AG04450 (cell line): ENCODE measurements at regions of chr9 and their contacts with region 1.

Region 1: GRCh38 chr9:94213511-94214124 is 45.5 kb upstream of the ZNF169 start:
- DNase-seq: peak; percentile 39
- H3K4me3 ChIP-seq: no peak overlapping the region
- H3K27ac ChIP-seq: no peak overlapping the region
- H3K27me3 ChIP-seq: no peaks in the 10 kb centered on the region
- CTCF ChIP-seq: peak; percentile 85

Region 2: DNA sequence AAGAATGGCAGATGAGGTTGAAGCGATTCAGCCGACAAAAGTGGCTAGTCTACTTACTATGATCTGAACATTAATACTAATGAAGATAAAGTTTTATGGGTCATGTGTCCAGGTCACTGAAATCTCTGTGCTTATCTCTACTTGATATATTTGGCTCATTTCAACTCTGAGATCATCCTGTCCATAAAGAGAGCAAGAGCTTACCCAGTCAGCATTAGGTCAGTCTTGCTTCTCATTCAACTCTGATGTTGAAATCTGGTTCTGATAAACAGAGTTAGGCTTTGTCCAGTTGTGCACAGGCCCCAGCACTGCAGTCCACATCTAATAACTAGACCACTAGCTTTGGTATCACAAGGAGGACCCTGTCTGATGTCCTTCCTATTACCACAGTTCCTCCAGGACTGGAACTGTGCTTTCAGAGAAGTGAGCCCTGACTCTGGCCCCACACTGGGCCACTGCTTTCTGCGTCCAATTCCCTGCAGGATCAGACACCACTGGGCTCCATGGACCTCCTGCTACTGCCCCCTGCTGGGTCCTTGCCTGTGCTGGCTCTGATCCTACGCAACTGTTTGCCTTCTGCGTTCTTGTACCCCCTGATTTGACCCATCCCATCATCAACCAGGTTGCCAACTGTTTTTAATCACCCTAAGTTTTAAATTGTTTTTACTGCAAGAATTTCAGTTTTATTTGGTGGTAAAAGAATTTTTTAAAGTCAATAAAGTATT is 785.8 kb before region 1 on chr9:
- CTCF ChIA-PET with region 1: no interaction called
- POLR2A ChIA-PET with region 1: no interaction called
- DNase-seq: no peak
- H3K4me3 ChIP-seq: no peak overlapping the region
- H3K27ac ChIP-seq: no peak overlapping the region
- H3K27me3 ChIP-seq: peaks cover 3% of the 10 kb centered on the region
- CTCF ChIP-seq: peak; percentile 13; the same call in 1 of the 2 replicates

Region 3: DNA sequence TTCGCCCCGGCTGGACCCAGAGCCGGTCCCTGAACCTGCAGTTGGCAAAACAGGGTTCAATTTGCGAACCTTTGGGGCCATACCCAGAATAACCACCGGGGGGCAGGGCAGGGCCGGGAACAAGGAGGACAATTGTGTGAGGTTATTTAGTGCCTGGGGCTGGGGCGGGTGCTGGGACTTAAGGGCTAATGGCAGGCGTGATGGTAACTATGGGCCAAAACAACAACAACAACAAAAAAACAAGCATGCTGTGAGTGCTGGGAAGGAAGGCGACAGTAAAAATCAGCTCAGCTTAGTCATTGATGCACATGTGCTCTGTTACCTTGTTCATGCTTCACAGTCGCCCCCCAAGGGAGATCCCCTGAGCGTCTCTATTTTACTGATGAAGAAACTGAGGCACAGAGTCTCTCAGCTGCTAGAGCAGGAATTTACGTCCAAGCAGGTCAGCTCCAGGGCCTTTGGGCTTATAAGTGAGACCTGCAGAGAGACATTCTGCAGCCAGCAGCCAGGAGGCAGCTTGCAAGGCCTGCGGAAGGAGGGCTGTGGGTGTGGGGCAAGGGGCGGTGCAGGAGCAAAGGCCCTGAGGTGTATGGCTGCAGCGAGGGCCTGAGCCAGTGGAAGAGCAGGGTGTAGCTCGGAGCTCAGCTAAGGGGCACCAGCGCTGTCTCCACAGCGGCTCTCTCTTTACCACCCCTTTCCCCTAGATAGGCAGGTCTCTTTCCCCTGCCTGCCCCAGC is 531.2 kb before region 1 on chr9:
- CTCF ChIA-PET with region 1: interaction called, 37 read pairs
- POLR2A ChIA-PET with region 1: no interaction called
- DNase-seq: no peak
- H3K4me3 ChIP-seq: no peak overlapping the region
- H3K27ac ChIP-seq: no peak overlapping the region
- H3K27me3 ChIP-seq: no peaks in the 10 kb centered on the region
- CTCF ChIP-seq: peak; percentile 84

Region 4: DNA sequence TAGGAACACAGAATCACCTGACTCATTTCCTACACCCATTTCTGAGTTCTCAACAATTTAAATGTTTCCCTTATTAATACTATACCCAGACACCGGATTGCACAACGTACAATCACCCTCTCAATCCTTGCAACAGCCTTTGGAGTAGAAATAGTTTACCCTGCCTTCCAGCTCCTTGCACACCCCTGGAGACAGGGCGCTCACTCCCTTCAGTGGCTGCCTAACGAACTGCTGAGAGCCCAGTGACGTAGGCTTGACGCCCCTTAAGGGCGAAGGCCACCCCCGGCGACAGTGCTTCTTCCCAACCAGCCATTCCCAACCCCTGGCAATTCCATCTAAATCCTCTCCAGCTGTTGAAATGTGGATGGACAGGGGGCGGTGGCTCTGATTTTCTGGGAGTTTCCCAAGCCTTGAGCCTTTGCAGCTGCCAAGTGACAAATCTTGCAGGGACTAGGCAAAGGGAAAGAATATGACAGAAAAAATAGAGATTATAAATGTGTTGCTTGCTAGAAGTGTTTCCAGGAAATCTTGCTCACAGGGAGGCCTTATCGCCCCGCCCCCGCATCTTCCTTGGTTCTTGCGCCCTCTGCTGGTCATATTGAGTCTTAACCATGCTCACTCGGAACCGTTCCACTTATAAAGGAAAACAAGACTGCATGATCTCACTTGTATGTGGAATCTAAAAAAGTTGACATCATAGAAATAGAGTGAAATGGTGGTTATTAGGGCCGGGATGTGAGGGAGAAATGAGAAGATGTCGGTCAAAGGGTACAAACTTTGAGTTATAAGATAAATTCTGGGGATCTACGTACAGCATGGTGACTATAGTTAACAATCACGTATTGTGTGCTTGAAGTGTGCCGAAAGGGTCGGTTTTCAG is 250.8 kb before region 1 on chr9:
- CTCF ChIA-PET with region 1: interaction called, 11 read pairs
- POLR2A ChIA-PET with region 1: no interaction called
- DNase-seq: peak; percentile 53
- H3K4me3 ChIP-seq: no peak overlapping the region
- H3K27ac ChIP-seq: no peak overlapping the region
- H3K27me3 ChIP-seq: peaks cover 54% of the 10 kb centered on the region
- CTCF ChIP-seq: peak; percentile 80

Region 5: DNA sequence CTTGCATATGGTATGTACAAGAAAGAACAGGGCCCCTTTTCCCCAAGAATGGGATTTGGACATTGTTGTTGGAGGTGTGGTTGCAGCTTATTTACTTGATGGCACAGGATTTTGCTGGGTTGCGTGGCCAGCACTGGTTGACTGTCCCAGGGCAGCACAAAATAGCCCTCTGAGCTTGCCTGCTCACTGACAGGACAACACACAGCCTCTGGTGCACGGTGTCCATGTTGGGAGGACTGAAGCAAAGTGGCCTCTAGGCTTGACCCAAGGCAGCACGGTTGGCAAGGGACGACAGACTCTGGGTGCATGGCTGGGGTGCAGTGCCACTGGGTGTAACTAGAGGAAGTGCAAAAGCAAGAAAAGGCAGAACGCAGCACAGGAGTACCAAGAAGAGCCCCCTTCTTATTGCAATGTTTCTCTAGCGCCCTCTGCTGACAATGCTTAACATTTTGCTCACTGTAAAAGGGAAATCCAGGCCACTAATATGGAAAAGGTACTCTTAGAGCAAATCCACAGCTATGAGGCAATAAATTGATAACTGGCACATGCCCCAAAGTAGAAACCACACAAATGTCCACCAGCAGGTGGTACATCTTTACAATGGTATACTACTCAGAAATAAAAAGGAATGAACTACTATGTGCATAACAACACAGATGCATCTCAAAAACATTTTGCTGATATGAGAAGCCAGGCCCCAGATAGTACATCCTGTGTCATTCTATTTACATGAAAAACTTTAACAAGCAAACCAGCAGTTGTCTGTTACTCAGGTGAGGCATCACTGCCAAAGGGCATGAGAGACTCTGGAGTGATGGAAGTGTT is 211.1 kb before region 1 on chr9:
- CTCF ChIA-PET with region 1: interaction called, 30 read pairs
- POLR2A ChIA-PET with region 1: no interaction called
- DNase-seq: peak; percentile 11
- H3K4me3 ChIP-seq: no peak overlapping the region
- H3K27ac ChIP-seq: no peak overlapping the region
- H3K27me3 ChIP-seq: no peaks in the 10 kb centered on the region
- CTCF ChIP-seq: peak; percentile 68

Region 6: DNA sequence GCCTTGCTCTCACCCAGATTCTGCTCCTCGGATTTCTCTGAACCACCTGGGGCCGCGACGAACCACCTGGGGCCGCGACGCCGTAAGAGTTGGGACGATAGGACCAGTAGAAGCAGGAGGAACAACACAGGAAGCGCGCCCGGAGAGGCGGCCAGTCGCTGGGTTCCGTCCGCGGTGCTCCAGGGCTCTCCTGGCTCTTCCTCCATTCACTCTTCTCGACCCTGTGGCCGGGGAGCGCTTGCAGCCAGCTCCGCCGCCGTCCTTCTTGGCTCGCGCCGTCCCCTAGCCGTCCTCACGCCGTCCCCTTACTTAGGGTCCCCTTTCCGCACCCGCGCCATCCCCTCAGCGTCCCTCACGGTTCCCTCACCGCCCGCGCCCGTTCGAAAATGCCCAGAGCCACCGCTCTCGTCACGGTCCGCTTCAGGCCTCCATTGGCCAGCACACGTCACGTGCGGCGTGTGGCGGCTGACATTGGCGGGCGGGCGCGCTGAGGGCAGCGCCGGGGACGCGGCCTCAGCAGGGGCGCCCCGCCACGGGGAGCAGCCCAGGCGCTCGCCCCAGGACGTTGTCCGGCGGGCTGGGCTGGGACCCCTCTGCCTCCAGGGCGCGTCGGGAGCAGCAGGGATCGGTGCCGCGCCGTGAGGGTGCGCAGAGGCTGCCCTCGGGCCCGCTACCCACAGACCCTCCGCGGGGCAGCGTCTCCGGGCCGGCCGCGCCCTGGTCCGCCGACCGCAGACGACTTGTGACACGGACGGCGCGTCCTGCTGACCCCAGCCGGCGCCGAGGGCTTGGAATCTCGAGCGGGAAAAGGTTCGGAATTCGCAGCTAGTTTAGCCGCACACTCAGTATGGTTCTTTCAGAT is 183.1 kb before region 1 on chr9:
- CTCF ChIA-PET with region 1: interaction called, 14 read pairs
- POLR2A ChIA-PET with region 1: no interaction called
- DNase-seq: peak; percentile 47
- H3K4me3 ChIP-seq: peak overlapping the region; percentile 87
- H3K27ac ChIP-seq: peak overlapping the region; percentile 35
- H3K27me3 ChIP-seq: no peaks in the 10 kb centered on the region
- CTCF ChIP-seq: no peak

Region 7: GRCh38 chr9:94065535-94065961 is 148.1 kb before region 1 on chr9:
- CTCF ChIA-PET with region 1: interaction called, 249 read pairs
- POLR2A ChIA-PET with region 1: interaction called, 7 read pairs
- DNase-seq: peak; percentile 82
- H3K4me3 ChIP-seq: no peak overlapping the region
- H3K27ac ChIP-seq: no peak overlapping the region
- H3K27me3 ChIP-seq: no peaks in the 10 kb centered on the region
- CTCF ChIP-seq: peak; percentile 85

Region 8: DNA sequence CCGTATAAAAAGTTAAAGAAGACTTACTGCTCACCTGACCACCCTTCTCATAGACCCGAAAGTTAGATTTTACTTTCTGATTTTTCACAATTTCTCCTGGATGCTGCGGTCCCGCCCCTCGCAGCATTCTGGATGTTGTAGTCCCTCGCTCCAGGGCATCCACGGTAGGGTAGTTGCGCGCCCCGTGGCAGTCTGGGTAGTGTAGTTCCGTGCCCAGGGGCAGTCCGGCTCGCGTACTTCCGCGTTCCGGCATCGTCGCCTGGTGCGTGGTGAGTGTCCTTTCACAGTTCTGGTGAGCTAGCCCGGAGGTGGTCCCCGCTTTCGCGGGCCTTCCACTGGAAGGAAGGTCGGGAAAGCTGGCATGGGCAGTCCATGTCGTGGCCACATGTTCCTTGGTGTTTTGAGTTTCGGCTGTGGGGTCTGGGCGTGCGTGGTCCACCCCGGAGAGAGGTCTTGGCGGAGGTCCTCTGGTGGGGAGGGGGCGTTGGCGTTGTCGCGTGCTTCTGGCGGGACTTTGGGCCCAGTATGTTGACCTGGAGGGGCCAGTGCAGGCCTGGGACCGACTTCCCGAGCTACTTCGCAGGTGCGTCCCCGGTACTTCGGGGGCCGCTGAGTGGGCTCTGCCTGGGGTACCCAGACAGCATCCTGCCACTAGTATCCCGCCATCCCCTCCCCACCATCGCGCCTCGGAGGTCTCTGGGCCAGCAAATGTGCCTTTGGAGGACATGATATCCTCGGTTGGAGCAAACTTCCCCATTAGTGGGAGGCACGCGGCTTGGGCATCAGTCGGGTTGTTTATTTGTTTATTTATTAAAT is 45.7 kb after region 1 on chr9 and contains the start of gene ZNF169:
- CTCF ChIA-PET with region 1: no interaction called
- POLR2A ChIA-PET with region 1: no interaction called
- DNase-seq: peak; percentile 59
- H3K4me3 ChIP-seq: peak within 1 kb of the TSS; percentile 100
- H3K27ac ChIP-seq: no peak within 1 kb of the TSS
- H3K27me3 ChIP-seq: no peaks in the 10 kb centered on the region
- CTCF ChIP-seq: no peak
- polyA plus RNA-seq, gene ZNF169: 2.3 and 2.4 TPM in 2 replicates